Caco-2 (cell line): ENCODE measurements at regions of chr3 and their contacts with region 1.

Region 1: DNA sequence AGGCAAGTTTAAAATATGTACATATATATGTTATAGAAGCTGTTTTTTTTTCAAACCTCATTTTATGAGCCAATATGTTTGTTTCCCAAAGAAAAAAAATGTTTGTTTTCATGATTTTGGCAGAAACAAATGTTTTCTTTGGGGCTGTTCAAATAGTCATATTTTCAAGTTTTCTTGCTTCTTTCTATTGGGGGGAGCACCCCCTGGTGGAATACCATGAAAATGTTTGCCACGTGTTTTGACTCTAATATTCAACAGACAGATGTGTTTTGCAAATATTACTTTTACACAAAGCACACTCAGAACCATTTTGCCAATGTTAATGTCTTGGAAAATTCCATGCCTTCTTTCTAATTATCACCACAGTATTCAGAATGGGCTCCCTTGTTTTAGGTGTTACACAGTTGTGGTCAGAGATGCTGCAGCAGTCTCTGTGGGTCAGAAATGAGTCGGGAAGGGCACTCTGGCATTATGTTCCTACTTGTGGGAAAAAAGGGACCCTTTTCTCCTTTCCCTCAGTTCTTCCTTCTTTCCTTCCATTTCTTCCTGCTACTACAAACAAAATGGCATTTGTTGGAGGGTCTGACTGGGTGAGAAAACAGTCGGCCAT is 817.0 kb downstream of the TUSC7 start:
- DNase-seq: peak in 1 of 2 experiments; percentile 50
- H3K4me3 ChIP-seq: no peak overlapping the region
- H3K4me3 Mint-ChIP-seq: no peak overlapping the region
- H3K27ac Mint-ChIP-seq: no peak overlapping the region
- H3K4me1 ChIP-seq: no peaks in the 10 kb centered on the region
- H3K4me1 Mint-ChIP-seq: no peaks in the 10 kb centered on the region
- H3K27me3 ChIP-seq: no peaks in the 10 kb centered on the region
- H3K27me3 Mint-ChIP-seq: peaks cover 7% of the 10 kb centered on the region
- CTCF ChIP-seq: peak; percentile 58 to 61

Region 2: GRCh38 chr3:116837483-116837882 is 689.1 kb before region 1 on chr3:
- CTCF ChIA-PET with region 1: interaction called, 10 read pairs
- POLR2A ChIA-PET with region 1: no interaction called
- intact Hi-C with region 1: no loop called
- DNase-seq: no peak
- H3K4me3 ChIP-seq: no peak overlapping the region
- H3K4me3 Mint-ChIP-seq: no peak overlapping the region
- H3K27ac Mint-ChIP-seq: no peak overlapping the region
- H3K4me1 ChIP-seq: no peaks in the 10 kb centered on the region
- H3K4me1 Mint-ChIP-seq: no peaks in the 10 kb centered on the region
- H3K27me3 ChIP-seq: no peaks in the 10 kb centered on the region
- H3K27me3 Mint-ChIP-seq: peaks cover 5% of the 10 kb centered on the region
- CTCF ChIP-seq: no peak

Region 3: DNA sequence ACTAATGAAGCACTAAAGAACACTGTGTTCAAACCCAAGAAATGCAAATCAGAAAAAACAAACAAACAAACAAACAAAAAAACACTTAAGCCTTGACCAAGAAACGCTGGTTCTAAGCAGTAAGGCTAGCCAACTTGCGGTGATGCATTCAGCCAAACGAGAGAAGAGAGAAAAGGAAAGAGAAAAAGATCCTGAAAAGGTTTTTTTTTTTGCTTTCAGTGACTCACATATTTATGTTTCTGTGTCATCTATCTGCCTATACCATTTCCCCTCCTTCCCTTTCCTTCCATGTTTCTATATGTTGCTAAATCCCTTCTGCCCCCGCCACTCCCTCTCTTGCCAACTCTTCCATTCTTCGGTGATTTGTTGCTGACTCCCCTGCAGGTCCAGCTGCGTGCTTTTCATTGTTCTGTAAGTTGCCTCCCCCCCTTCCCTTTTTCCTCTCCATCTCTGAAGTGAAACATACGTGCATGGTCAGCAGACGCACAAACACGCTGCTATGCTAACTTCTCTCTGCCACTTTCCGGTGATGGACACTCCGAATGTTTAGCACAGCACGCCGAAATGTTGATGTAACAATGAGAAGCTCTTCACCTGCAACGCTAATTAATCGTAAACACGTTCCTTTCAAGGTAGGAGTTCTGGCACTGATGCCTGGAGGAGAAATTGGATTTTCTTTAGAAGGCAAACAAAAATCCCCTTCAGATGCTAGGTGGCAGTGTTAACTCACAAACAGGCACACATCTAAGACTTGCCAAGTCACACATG is 662.6 kb before region 1 on chr3:
- CTCF ChIA-PET with region 1: no interaction called
- POLR2A ChIA-PET with region 1: no interaction called
- intact Hi-C with region 1: loop called (anchors 10 kb)
- DNase-seq: peak in 1 of 2 experiments; percentile 14
- H3K4me3 ChIP-seq: no peak overlapping the region
- H3K4me3 Mint-ChIP-seq: no peak overlapping the region
- H3K27ac Mint-ChIP-seq: no peak overlapping the region
- H3K4me1 ChIP-seq: no peaks in the 10 kb centered on the region
- H3K4me1 Mint-ChIP-seq: no peaks in the 10 kb centered on the region
- H3K27me3 ChIP-seq: no peaks in the 10 kb centered on the region
- H3K27me3 Mint-ChIP-seq: no peaks in the 10 kb centered on the region
- CTCF ChIP-seq: peak in 1 of 2 experiments; percentile 25

Region 4: DNA sequence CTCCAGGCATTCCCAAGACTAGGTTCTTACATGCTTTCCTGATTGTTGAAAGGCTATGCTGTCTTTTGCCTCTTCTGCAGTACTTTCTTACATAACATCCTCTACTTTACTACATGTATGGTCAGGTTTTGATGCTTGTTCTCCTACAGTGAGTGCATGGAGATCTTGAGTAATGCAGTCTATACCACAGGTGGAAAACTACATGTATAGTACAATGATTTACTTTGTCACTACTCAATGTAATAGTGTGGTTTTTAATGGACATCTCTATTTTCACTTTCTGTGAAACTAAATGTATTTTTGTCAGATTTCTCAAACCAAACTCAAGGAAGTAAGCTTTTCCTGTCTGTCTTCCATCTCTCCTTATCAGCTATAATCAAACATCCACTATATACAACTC is 160.0 kb before region 1 on chr3:
- CTCF ChIA-PET with region 1: no interaction called
- POLR2A ChIA-PET with region 1: no interaction called
- intact Hi-C with region 1: no loop called
- DNase-seq: no peak
- H3K4me3 ChIP-seq: no peak overlapping the region
- H3K4me3 Mint-ChIP-seq: no peak overlapping the region
- H3K27ac Mint-ChIP-seq: no peak overlapping the region
- H3K4me1 ChIP-seq: no peaks in the 10 kb centered on the region
- H3K4me1 Mint-ChIP-seq: no peaks in the 10 kb centered on the region
- H3K27me3 ChIP-seq: no peaks in the 10 kb centered on the region
- H3K27me3 Mint-ChIP-seq: peaks cover 4% of the 10 kb centered on the region
- CTCF ChIP-seq: no peak

Region 5: DNA sequence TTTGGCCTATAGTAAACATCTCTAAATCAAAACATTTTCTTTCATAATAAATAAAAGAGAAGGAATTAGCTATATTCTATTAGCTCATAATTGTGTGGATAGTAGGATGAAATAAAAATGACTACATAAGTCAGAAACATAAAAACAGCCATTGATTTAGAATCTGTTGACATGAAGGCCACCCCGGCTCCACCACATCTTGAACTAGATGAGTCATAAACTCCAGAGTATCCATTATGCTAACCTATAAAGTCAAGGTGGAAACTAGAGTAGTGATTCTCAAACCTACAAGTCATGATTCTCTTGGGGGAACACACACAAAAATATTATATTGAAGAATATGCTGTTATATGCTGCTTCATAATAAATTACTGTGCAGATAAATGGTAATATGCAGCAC is 14.0 kb after region 1 on chr3:
- CTCF ChIA-PET with region 1: no interaction called
- POLR2A ChIA-PET with region 1: no interaction called
- intact Hi-C with region 1: no loop called
- DNase-seq: no peak
- H3K4me3 ChIP-seq: no peak overlapping the region
- H3K4me3 Mint-ChIP-seq: no peak overlapping the region
- H3K27ac Mint-ChIP-seq: no peak overlapping the region
- H3K4me1 ChIP-seq: no peaks in the 10 kb centered on the region
- H3K4me1 Mint-ChIP-seq: no peaks in the 10 kb centered on the region
- H3K27me3 ChIP-seq: no peaks in the 10 kb centered on the region
- H3K27me3 Mint-ChIP-seq: no peaks in the 10 kb centered on the region
- CTCF ChIP-seq: no peak

Region 6: DNA sequence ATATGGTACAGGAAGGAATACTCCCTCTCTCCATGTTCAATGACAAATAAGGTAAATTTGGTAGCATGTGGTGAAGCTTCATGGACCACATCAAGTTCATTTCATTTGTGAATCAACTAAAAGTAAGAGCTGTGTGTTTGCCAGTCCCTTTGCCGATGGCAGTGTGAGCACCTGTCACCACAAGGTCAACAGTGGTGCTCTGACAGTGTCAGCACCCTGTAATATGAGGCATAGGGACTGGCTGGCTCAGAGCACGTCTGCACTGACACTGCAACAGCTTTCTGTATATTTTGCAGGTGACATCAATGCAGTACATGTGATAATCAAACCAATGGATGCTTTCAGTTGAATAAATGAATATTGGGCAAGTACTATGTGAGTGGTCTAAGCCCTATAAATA is 35.4 kb after region 1 on chr3:
- CTCF ChIA-PET with region 1: no interaction called
- POLR2A ChIA-PET with region 1: no interaction called
- intact Hi-C with region 1: no loop called
- DNase-seq: no peak
- H3K4me3 ChIP-seq: no peak overlapping the region
- H3K4me3 Mint-ChIP-seq: no peak overlapping the region
- H3K27ac Mint-ChIP-seq: no peak overlapping the region
- H3K4me1 ChIP-seq: no peaks in the 10 kb centered on the region
- H3K4me1 Mint-ChIP-seq: peaks cover 14% of the 10 kb centered on the region
- H3K27me3 ChIP-seq: no peaks in the 10 kb centered on the region
- H3K27me3 Mint-ChIP-seq: peaks cover 2% of the 10 kb centered on the region
- CTCF ChIP-seq: no peak

Region 7: GRCh38 chr3:117706037-117706436 is 179.5 kb after region 1 on chr3:
- CTCF ChIA-PET with region 1: no interaction called
- POLR2A ChIA-PET with region 1: no interaction called
- intact Hi-C with region 1: no loop called
- DNase-seq: no peak
- H3K4me3 ChIP-seq: no peak overlapping the region
- H3K4me3 Mint-ChIP-seq: no peak overlapping the region
- H3K27ac Mint-ChIP-seq: no peak overlapping the region
- H3K4me1 ChIP-seq: no peaks in the 10 kb centered on the region
- H3K4me1 Mint-ChIP-seq: no peaks in the 10 kb centered on the region
- H3K27me3 ChIP-seq: no peaks in the 10 kb centered on the region
- H3K27me3 Mint-ChIP-seq: peaks cover 11% of the 10 kb centered on the region
- CTCF ChIP-seq: no peak